ENCODE measurements at regions of chr15 and their contacts with region 1.

Region 1: DNA sequence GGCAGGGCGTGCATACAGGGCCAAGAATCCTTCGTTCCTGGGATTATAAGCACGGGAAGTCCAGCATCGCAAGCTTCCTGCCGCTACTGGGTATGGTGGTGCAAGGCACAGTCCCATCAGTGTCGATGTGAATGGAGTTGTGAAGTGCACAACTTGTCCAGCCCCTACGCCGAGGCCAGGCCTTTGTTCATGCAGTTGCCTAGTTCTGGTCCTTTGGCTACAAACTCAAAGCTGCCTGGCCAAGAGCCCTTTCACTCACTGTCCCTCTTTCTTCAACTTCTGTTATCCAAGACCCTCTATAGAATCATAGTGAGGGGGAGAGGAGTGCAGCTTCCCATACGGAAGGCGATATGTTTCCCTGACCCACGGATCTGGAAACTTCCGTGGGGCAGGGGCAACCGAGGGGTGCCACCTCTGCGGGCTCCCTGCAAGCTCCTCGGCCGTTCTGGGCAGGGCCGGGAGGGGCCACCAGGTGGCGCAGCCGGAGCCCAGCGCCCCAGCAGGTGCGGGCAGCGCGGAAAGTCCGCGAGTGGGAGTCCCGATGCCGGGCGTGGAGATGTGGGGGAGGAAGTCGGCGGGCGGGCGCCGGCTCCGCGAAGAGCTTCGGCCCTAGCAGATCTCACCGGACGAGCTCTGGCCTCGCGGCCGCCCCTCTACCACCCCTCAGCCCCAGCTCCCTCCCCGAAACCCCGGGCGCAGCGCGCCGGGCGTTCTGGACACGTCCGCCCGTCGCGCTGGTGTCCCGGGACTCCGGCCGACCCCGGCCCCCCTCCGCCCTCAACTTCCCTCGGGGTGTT is 693 bp downstream of the RASGRP1 start:
- DNase-seq: peak; percentile 39
- H3K4me3 ChIP-seq: peak overlapping the region; percentile 34 to 54 (median 54)
- H3K27ac ChIP-seq: no peak overlapping the region
- H3K4me1 ChIP-seq: peaks cover 3% of the 10 kb centered on the region
- H3K27me3 ChIP-seq: peaks cover 4% of the 10 kb centered on the region
- CTCF ChIP-seq: peak; percentile 49 to 95

Region 2: GRCh38 chr15:37880009-37880834 is 683.7 kb before region 1 on chr15:
- CTCF ChIA-PET with region 1: no interaction called
- dilution Hi-C with region 1: no loop called
- in situ Hi-C with region 1: no loop called
- intact Hi-C with region 1: no loop called
- DNase-seq: peak; percentile 16
- H3K4me3 ChIP-seq: no peak overlapping the region
- H3K27ac ChIP-seq: no peak overlapping the region
- H3K4me1 ChIP-seq: no peaks in the 10 kb centered on the region
- H3K27me3 ChIP-seq: peaks cover 3% of the 10 kb centered on the region
- CTCF ChIP-seq: peak; percentile 73 to 74

Region 3: DNA sequence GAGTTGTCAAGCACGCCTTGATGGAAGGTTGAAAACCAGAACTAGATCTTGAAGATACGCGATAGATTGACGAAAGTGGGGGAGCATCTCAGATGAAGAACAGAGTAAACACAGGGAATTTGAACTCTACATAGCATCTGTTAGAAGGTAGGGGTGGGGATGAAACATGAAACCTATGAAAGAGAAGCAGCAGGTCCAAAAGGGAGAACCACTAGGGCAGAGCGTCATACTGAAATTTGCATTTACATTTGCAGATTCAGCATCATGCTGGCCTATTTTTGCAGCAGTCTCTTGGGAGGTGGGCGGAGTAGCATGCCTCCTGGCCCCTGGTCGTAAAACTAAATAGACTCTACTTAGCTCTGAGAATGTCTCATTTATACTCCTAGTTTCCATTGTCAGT is 46.8 kb after region 1 on chr15:
- CTCF ChIA-PET with region 1: no interaction called
- dilution Hi-C with region 1: no loop called
- in situ Hi-C with region 1: no loop called
- intact Hi-C with region 1: no loop called
- DNase-seq: no peak
- H3K4me3 ChIP-seq: no peak overlapping the region
- H3K27ac ChIP-seq: no peak overlapping the region
- H3K4me1 ChIP-seq: no peaks in the 10 kb centered on the region
- H3K27me3 ChIP-seq: peaks cover 3% of the 10 kb centered on the region
- CTCF ChIP-seq: no peak

Region 4: DNA sequence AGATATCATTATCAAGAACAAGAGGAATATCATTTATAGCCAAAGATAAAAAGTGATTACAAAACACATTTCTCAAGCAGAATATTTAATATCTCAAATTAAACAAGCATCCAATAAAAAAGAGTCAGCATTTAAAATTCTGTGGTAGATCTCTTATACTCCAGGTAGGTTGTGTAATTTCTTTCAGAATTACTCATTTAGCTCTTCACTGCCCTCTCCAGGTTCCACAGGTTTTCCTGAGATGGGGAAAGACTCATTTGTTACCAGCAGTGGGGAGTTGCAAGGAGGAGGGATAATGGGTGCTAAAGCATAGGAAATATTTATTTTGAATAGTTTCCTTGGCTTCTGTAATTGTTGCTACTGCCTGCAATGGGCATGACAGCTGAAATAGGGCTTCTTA is 83.8 kb after region 1 on chr15:
- CTCF ChIA-PET with region 1: no interaction called
- dilution Hi-C with region 1: no loop called
- in situ Hi-C with region 1: no loop called
- intact Hi-C with region 1: loop called (anchors 1 kb)
- DNase-seq: peak; percentile 56
- H3K4me3 ChIP-seq: peak overlapping the region in 1 of 3 experiments; percentile 15
- H3K27ac ChIP-seq: peak overlapping the region; percentile 5
- H3K4me1 ChIP-seq: peaks cover 28% of the 10 kb centered on the region
- H3K27me3 ChIP-seq: no peaks in the 10 kb centered on the region
- CTCF ChIP-seq: peak; percentile 72 to 74

Region 5: GRCh38 chr15:38683382-38684242 is 119.7 kb after region 1 on chr15:
- CTCF ChIA-PET with region 1: interaction called, 3 read pairs
- dilution Hi-C with region 1: no loop called
- in situ Hi-C with region 1: loop called (anchors 5 to 10 kb)
- intact Hi-C with region 1: loop called (anchors 1 kb)
- DNase-seq: peak; percentile 32
- H3K4me3 ChIP-seq: no peak overlapping the region
- H3K27ac ChIP-seq: no peak overlapping the region
- H3K4me1 ChIP-seq: peaks cover 4% of the 10 kb centered on the region
- H3K27me3 ChIP-seq: no peaks in the 10 kb centered on the region
- CTCF ChIP-seq: peak; percentile 86 to 89

Region 6: GRCh38 chr15:38714309-38715072 is 150.6 kb after region 1 on chr15:
- CTCF ChIA-PET with region 1: no interaction called
- dilution Hi-C with region 1: no loop called
- in situ Hi-C with region 1: no loop called
- intact Hi-C with region 1: no loop called
- DNase-seq: peak; percentile 94
- H3K4me3 ChIP-seq: no peak overlapping the region
- H3K27ac ChIP-seq: peak overlapping the region; percentile 95
- H3K4me1 ChIP-seq: peaks cover 27% of the 10 kb centered on the region
- H3K27me3 ChIP-seq: no peaks in the 10 kb centered on the region
- CTCF ChIP-seq: no peak

Region 7: GRCh38 chr15:38945551-38946298 is 381.8 kb after region 1 on chr15:
- CTCF ChIA-PET with region 1: no interaction called
- dilution Hi-C with region 1: no loop called
- in situ Hi-C with region 1: no loop called
- intact Hi-C with region 1: no loop called
- DNase-seq: no peak
- H3K4me3 ChIP-seq: no peak overlapping the region
- H3K27ac ChIP-seq: no peak overlapping the region
- H3K4me1 ChIP-seq: no peaks in the 10 kb centered on the region
- H3K27me3 ChIP-seq: no peaks in the 10 kb centered on the region
- CTCF ChIP-seq: no peak

Measured in mammary epithelial cell (primary cell).